ENCODE measurements at regions of chr3 and their contacts with region 1.

Region 1: GRCh38 chr3:107660306-107660976 is 137.7 kb downstream of the BBX start:
- DNase-seq: peak; percentile 54
- H3K4me3 Mint-ChIP-seq: no peak overlapping the region
- H3K27ac Mint-ChIP-seq: no peak overlapping the region
- H3K4me1 Mint-ChIP-seq: peaks cover 29% of the 10 kb centered on the region
- H3K27me3 Mint-ChIP-seq: no peaks in the 10 kb centered on the region
- CTCF ChIP-seq: peak; percentile 53

Region 2: GRCh38 chr3:107753480-107753879 is 93.0 kb after region 1 on chr3:
- CTCF ChIA-PET with region 1: interaction called, 11 read pairs
- POLR2A ChIA-PET with region 1: no interaction called
- intact Hi-C with region 1: no loop called
- DNase-seq: peak; percentile 63
- H3K4me3 Mint-ChIP-seq: no peak overlapping the region
- H3K27ac Mint-ChIP-seq: no peak overlapping the region
- H3K4me1 Mint-ChIP-seq: peaks cover 6% of the 10 kb centered on the region
- H3K27me3 Mint-ChIP-seq: no peaks in the 10 kb centered on the region
- CTCF ChIP-seq: peak; percentile 40